ENCODE measurements at regions of chr22 and their contacts with region 1.

Region 1: GRCh38 chr22:40177738-40178416 is at the start of gene TNRC6B:
- DNase-seq: peak; percentile 79
- H3K4me3 Mint-ChIP-seq: peak within 1 kb of the TSS; percentile 87
- H3K27ac Mint-ChIP-seq: peak within 1 kb of the TSS; percentile 92
- H3K4me1 Mint-ChIP-seq: peaks cover 56% of the 10 kb centered on the region
- H3K27me3 Mint-ChIP-seq: no peaks in the 10 kb centered on the region
- total RNA-seq, gene TNRC6B: 26.2 and 30.9 TPM in 2 replicates

Region 2: GRCh38 chr22:39532215-39533071 is 645.4 kb before region 1 on chr22 and contains the start of gene RPS19BP1:
- intact Hi-C with region 1: loop called (anchors 1 kb)
- DNase-seq: peak; percentile 99
- H3K4me3 Mint-ChIP-seq: peak within 1 kb of the TSS; percentile 96
- H3K27ac Mint-ChIP-seq: peak within 1 kb of the TSS; percentile 93
- H3K4me1 Mint-ChIP-seq: peaks cover 52% of the 10 kb centered on the region
- H3K27me3 Mint-ChIP-seq: no peaks in the 10 kb centered on the region
- total RNA-seq, gene RPS19BP1: 98.7 and 101 TPM in 2 replicates

Region 3: DNA sequence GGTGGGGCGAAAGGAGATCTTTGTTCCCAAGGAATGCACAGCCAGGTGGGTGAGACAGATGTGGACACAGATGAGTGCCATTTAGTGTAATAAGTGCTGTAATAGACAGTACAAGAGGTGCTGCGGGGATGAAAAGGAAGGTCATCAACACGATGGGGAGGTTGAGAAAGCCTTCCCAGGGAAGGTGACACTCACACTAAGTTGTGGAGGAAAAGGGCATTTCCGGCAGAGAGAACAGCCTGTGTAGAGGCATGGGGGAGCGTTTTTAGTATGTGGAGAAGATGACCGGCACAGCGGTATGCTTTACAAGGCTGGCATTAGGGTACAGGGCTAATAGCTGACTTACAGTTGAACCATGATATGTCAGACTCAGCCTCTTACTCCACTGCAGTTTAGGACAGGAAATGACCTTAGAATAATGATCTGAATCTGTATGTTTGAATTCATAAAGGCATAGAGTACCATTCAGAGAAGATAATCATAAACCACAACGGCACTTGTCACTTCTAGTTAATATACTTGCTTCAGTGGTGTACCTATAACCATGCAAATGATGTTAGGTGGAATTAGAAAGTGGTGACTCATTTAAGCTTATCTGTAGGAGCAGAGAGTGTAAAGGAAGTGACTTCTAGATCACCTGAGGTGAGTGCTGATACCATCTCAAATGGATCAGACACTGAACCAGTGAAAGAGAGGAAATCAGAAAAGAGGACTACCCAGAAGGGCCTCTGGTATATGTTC is 122.6 kb before region 1 on chr22:
- intact Hi-C with region 1: loop called (anchors 1 kb)
- DNase-seq: no peak
- H3K4me3 Mint-ChIP-seq: peak overlapping the region; percentile 64
- H3K27ac Mint-ChIP-seq: peak overlapping the region; percentile 88
- H3K4me1 Mint-ChIP-seq: peaks cover 54% of the 10 kb centered on the region
- H3K27me3 Mint-ChIP-seq: no peaks in the 10 kb centered on the region

Region 4: GRCh38 chr22:40196628-40197360 is 18.9 kb after region 1 on chr22:
- intact Hi-C with region 1: loop called (anchors 1 kb)
- DNase-seq: no peak
- H3K4me3 Mint-ChIP-seq: no peak overlapping the region
- H3K27ac Mint-ChIP-seq: peak overlapping the region; percentile 73
- H3K4me1 Mint-ChIP-seq: peaks cover 50% of the 10 kb centered on the region
- H3K27me3 Mint-ChIP-seq: no peaks in the 10 kb centered on the region

Region 5: GRCh38 chr22:40250608-40251007 is 72.7 kb after region 1 on chr22:
- intact Hi-C with region 1: loop called (anchors 1 kb)
- DNase-seq: no peak
- H3K4me3 Mint-ChIP-seq: no peak overlapping the region
- H3K27ac Mint-ChIP-seq: peak overlapping the region; percentile 10
- H3K4me1 Mint-ChIP-seq: peaks cover 58% of the 10 kb centered on the region
- H3K27me3 Mint-ChIP-seq: no peaks in the 10 kb centered on the region

Region 6: GRCh38 chr22:40326905-40327735 is 149.2 kb after region 1 on chr22:
- intact Hi-C with region 1: loop called (anchors 1 kb)
- DNase-seq: no peak
- H3K4me3 Mint-ChIP-seq: peak overlapping the region; percentile 29
- H3K27ac Mint-ChIP-seq: peak overlapping the region; percentile 80
- H3K4me1 Mint-ChIP-seq: peaks cover 90% of the 10 kb centered on the region
- H3K27me3 Mint-ChIP-seq: no peaks in the 10 kb centered on the region

Region 7: DNA sequence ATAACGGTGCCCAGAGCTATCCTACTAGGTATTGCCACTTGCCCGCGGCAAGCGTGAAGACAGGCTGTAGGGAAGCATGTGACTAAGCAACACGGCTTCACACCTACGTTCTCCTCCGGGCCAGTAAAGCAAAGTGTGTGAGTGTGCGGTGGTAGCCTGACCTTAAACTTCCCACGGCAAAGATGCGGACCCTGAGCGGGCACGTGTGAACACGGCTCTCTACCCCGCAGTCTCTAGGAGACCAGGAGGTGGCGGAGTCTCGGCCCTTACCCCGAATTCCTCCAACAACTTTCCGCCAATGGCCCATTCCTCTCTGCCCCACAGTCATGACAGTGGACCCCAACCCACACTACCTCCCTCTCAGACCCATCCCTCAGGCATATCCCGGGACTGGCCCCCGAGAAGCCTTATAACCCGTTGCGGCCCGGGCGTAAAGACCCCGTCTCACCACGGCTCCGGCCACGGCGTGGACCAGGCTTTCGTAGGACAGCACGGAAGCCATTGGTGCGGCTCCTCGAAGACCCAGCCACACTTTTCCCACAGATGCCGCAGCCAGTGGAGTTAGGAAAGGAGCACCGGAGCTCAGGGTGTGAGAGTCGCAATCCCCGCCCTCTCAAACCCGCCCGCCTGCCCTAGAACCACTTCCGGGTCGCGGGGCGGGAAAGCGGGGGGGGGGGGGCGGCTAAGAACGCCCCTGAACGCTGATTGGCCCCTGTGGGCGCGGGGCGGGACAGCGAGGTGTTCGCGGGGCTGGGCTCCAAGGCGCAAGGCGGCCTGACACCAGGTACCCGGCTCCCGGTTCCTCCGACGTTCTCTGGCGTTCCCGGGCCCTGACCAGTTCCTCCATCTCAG is 641.1 kb after region 1 on chr22 and contains the start of gene SLC25A17:
- intact Hi-C with region 1: loop called (anchors 2 kb)
- DNase-seq: peak; percentile 82
- H3K4me3 Mint-ChIP-seq: peak within 1 kb of the TSS; percentile 87
- H3K27ac Mint-ChIP-seq: peak within 1 kb of the TSS; percentile 93
- H3K4me1 Mint-ChIP-seq: peaks cover 33% of the 10 kb centered on the region
- H3K27me3 Mint-ChIP-seq: no peaks in the 10 kb centered on the region
- total RNA-seq, gene SLC25A17: 29.4 and 34.0 TPM in 2 replicates